Activated CD8-positive, alpha-beta T cell treated with anti-CD3 and anti-CD28 coated beads for 36 hours (primary cell): ENCODE measurements at regions of chr1 and their contacts with region 1.

Region 1: GRCh38 chr1:217482356-217483102 is 148.4 kb downstream of the GPATCH2 start:
- DNase-seq: peak; percentile 89
- ATAC-seq: peak; percentile 99
- H3K4me3 Mint-ChIP-seq: peak overlapping the region; percentile 18
- H3K27ac Mint-ChIP-seq: peak overlapping the region; percentile 88
- H3K4me1 Mint-ChIP-seq: peaks cover 26% of the 10 kb centered on the region
- H3K27me3 Mint-ChIP-seq: no peaks in the 10 kb centered on the region
- CTCF ChIP-seq: no peak

Region 2: DNA sequence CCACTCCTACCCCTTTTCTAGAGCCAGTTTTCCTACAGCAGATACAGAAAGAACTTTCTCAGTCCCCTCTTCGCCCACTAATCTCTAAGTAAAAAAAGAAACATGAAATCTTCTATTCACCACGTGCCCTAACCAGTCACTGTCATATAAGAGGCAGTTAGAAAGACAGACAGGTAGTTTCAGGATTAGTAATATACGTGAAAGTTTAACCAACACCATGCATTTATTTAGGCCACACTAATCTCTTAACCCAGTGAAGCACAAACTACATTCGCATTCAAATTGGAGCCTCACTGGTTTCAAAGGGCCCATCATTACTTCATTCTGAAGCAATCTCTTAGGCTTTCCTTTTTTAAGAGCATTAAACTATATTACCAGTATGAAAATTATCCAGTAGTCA is 138.3 kb after region 1 on chr1:
- CTCF ChIA-PET with region 1: no interaction called
- POLR2A ChIA-PET with region 1: no interaction called
- intact Hi-C with region 1: loop called (anchors 5 kb)
- DNase-seq: no peak
- ATAC-seq: peak; percentile 98
- H3K4me3 Mint-ChIP-seq: no peak overlapping the region
- H3K27ac Mint-ChIP-seq: no peak overlapping the region
- H3K4me1 Mint-ChIP-seq: peaks cover 30% of the 10 kb centered on the region
- H3K27me3 Mint-ChIP-seq: no peaks in the 10 kb centered on the region
- CTCF ChIP-seq: no peak

Region 3: DNA sequence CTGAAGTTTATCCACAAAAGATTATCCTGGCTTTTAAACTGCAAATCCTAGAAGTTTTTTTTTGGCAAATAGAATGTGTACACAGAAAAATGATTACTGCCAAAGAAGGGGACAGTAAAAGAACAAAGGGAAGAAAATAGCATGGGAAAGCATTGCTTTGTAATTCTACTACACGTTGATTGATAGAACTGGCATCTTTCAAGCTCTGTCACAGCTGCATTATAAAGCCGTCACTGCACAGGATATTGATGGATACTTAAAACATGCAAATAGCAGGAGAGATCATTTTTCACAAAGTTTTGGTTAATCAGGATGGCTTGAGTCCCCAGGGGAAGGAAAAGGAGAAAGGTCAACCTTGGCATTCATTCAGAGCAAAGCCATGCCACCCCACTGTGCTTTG is 618.9 kb after region 1 on chr1:
- CTCF ChIA-PET with region 1: no interaction called
- POLR2A ChIA-PET with region 1: no interaction called
- intact Hi-C with region 1: no loop called
- DNase-seq: no peak
- ATAC-seq: no peak
- H3K4me3 Mint-ChIP-seq: no peak overlapping the region
- H3K27ac Mint-ChIP-seq: no peak overlapping the region
- H3K4me1 Mint-ChIP-seq: no peaks in the 10 kb centered on the region
- H3K27me3 Mint-ChIP-seq: no peaks in the 10 kb centered on the region
- CTCF ChIP-seq: no peak